ENCODE measurements at regions of chr1 and their contacts with region 1.

Region 1: GRCh38 chr1:179365320-179366092 is at the start of gene AXDND1:
- DNase-seq: peak; percentile 52
- H3K4me3 ChIP-seq: peak within 1 kb of the TSS; percentile 80
- H3K27ac ChIP-seq: peak within 1 kb of the TSS; percentile 97
- H3K27me3 ChIP-seq: no peaks in the 10 kb centered on the region
- CTCF ChIP-seq: peak; percentile 38
- polyA plus RNA-seq, gene AXDND1: 0.27 TPM in 1 of 2 replicates, not detected in the other

Region 2: DNA sequence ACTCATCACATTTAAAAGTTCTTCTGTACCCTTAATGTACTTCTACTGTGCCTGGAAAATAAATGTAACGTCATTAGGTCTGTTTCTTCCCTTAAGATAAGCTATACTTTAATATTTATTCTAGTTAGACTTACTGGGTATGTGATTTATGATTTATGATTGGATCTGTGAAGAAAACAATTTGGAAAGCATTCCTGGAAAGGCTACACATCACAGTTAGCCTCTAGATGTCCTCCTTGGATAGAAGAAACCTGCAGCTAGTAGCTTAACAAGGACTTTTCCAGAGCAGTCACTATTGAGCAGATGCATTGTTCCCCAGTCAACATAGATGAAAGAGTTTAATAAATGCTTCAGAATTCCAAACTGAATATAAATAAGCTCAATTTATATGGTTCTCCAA is 113.8 kb before region 1 on chr1:
- CTCF ChIA-PET with region 1: interaction called, 123 read pairs
- POLR2A ChIA-PET with region 1: no interaction called
- DNase-seq: no peak
- H3K4me3 ChIP-seq: no peak overlapping the region
- H3K27ac ChIP-seq: no peak overlapping the region
- H3K27me3 ChIP-seq: no peaks in the 10 kb centered on the region
- CTCF ChIP-seq: peak; percentile 53

Region 3: DNA sequence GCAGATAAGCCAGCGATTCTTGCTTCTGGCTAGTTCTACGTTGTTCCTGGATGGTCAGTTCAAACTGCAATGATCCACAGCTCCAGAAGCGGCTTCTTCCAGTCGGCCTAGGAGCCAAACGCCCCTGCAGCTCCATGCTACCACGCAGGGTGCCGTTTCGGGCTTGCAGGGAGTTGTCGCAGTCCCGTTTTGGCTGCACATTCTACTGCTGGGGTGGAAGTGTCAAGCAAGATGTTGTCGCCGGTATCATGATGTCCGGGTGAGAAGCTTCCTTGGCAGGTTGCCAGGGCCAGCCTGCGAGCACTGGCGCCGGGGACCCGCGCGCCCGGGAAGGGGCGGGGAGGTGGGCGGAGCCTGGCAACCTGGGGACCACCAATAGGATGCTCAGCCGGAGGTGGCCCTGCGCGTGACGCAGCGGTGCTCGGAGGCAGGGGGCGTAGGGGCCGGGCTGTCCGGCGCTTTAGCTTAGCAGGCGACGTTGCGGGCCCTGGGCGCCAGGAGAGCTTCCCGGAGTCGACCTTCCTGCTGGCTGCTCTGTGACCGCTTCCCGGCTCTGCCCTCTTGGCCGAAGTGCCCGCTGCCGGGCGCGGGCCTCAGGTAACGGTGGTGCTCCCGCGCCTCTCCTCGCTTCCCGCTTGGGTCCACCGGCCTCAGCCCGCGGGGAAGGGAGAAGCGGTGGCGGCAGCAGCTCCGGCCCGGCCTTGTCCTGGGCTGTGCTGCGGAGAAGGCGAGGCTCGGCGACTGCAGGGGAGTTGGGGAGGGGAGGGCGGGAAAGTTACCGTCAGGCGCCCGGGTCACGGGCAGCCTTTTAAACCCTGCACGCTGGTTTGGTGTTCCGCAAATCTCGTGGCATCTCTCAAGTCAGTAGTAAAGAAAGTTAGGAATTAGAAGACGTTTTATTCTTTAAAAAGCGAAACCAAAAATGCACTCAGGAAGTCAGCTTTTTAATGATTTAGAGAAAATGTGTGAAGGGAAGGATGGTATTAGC is 71.9 kb before region 1 on chr1 and contains the start of gene SOAT1:
- CTCF ChIA-PET with region 1: interaction called, 10 read pairs
- POLR2A ChIA-PET with region 1: interaction called, 8 read pairs
- DNase-seq: peak; percentile 65
- H3K4me3 ChIP-seq: peak within 1 kb of the TSS; percentile 90
- H3K27ac ChIP-seq: peak within 1 kb of the TSS; percentile 87
- H3K27me3 ChIP-seq: no peaks in the 10 kb centered on the region
- CTCF ChIP-seq: peak; percentile 14; the same call in 1 of the 2 replicates
- polyA plus RNA-seq, gene SOAT1: 39.2 and 54.2 TPM in 2 replicates